ENCODE measurements at regions of chr2 and their contacts with region 1.

Region 1: DNA sequence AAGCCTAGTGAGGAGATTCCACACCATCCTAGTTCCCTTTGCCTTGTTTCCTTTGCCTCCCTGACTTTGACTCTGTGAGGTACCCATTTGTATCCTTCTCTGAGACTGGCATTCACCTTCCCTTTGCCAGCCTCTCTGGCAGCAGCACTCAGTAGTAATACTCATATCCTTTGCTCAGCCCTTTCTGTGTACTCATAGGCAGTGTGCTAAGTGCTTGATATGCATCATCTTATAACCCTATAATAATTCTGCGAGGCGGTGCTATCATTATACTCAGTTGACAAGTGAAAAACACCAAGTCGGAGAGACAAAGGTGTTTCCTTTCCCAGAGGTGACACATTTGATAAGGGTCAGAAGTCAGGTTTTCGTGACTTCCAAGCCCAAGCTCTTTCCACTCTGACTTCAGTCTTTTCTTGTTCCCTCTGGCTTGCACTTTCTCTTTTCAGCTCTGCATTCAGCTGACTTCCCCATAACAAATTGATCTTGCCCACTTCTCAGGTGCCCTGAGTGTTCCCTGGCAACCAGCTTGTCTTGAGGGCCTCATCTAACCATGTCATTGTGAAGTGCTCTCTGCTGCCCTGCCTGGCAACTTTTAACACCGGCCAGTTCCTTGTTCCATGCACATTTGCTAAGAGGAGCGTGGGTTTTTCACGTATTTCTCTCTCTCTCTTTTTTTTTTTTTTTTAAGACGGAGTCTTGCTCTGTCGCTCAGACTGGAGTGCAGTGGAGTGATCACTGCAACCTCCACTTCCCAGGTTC is 94.5 kb upstream of the UPP2 start:
- DNase-seq: peak; percentile 35
- H3K4me3 Mint-ChIP-seq: no peak overlapping the region
- H3K27ac Mint-ChIP-seq: no peak overlapping the region
- H3K4me1 Mint-ChIP-seq: peaks cover 15% of the 10 kb centered on the region
- H3K27me3 Mint-ChIP-seq: no peaks in the 10 kb centered on the region

Region 2: DNA sequence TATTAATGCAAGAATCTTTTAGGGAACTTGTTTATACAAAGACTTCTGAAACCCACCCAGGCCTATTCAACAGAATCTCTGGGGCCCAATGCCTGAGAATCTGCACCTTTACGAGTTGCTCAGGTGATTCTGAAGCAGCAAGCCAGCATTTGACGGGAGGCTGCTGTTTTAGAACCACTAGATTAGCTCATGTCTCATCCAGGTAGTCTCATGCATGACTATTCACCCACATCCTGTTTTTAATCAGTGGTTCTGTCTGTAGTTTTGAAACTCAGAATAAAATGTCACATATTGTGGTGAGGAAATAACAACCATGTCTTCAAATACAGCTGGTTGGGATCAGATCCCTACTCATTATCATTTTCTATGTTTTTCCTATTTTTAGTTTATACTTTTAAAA is 602.8 kb before region 1 on chr2:
- CTCF ChIA-PET with region 1: no interaction called
- intact Hi-C with region 1: loop called (anchors 5 kb)
- DNase-seq: peak; percentile 80
- H3K4me3 Mint-ChIP-seq: no peak overlapping the region
- H3K27ac Mint-ChIP-seq: peak overlapping the region; percentile 72
- H3K4me1 Mint-ChIP-seq: peaks cover 76% of the 10 kb centered on the region
- H3K27me3 Mint-ChIP-seq: no peaks in the 10 kb centered on the region

Region 3: DNA sequence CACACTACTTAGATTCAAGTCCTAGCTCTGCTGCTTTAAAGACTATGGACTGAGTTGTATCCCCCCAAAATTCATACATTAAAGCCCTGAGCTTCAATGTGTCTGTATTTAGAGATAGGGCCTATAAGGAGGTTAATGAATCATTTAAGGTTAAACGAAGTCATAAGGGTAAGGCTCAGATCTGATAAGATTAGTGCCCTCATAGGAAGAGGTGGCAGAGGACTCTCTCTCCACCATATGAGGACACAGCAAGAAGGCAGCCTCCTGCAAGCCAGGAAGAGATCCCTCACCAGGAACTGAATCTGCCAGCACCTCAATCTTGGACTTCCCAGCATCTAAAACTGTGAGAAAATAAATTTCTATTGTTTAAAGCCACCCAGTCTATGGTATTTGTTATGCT is 560.1 kb before region 1 on chr2:
- CTCF ChIA-PET with region 1: no interaction called
- intact Hi-C with region 1: no loop called
- DNase-seq: no peak
- H3K4me3 Mint-ChIP-seq: peak overlapping the region; percentile 76
- H3K27ac Mint-ChIP-seq: peak overlapping the region; percentile 100
- H3K4me1 Mint-ChIP-seq: peaks cover 55% of the 10 kb centered on the region
- H3K27me3 Mint-ChIP-seq: no peaks in the 10 kb centered on the region

Region 4: GRCh38 chr2:157497638-157498314 is 509.4 kb before region 1 on chr2:
- CTCF ChIA-PET with region 1: interaction called, 8 read pairs
- intact Hi-C with region 1: loop called (anchors 1 kb)
- DNase-seq: peak; percentile 25
- H3K4me3 Mint-ChIP-seq: no peak overlapping the region
- H3K27ac Mint-ChIP-seq: no peak overlapping the region
- H3K4me1 Mint-ChIP-seq: peaks cover 23% of the 10 kb centered on the region
- H3K27me3 Mint-ChIP-seq: no peaks in the 10 kb centered on the region

Region 5: DNA sequence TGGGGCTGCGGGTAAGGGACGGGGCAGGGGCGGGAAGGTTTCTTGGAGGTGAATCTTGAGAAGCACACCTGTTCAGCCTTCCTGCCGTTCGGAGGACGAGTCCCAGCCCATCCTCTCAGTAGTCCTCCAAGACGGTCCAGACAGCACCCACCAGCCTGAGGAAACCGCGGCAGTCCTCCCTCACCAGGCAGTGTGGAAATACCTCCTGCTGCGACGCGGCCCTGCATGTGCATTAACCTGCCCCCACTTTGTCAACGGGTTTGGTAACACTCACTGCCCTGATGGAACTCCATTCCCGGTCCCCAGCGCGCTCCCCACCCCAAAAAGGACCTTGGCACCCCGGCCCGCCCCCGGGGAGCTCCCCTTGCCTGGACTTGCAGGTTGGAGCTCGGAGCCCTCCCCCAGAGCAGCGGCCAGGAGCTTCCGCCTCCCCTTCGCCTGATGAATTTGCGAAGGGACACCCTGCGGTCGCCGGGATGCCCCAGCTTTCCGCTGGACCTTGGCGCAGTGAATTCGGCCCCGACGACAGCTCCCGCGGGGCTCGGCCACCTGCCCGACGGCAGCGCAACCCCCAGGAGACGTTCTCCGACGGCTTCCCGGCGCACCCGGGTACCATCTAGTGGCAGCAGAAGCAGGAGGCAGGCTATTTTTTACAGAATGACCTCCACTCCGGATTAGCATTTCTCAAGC is 410.0 kb before region 1 on chr2:
- CTCF ChIA-PET with region 1: no interaction called
- intact Hi-C with region 1: loop called (anchors 1 kb)
- DNase-seq: peak; percentile 78
- H3K4me3 Mint-ChIP-seq: peak overlapping the region; percentile 71
- H3K27ac Mint-ChIP-seq: no peak overlapping the region
- H3K4me1 Mint-ChIP-seq: peaks cover 18% of the 10 kb centered on the region
- H3K27me3 Mint-ChIP-seq: no peaks in the 10 kb centered on the region

Region 6: GRCh38 chr2:157777427-157777826 is 229.7 kb before region 1 on chr2:
- CTCF ChIA-PET with region 1: interaction called, 82 read pairs
- intact Hi-C with region 1: loop called (anchors 1 kb)
- DNase-seq: peak; percentile 80
- H3K4me3 Mint-ChIP-seq: no peak overlapping the region
- H3K27ac Mint-ChIP-seq: no peak overlapping the region
- H3K4me1 Mint-ChIP-seq: peaks cover 12% of the 10 kb centered on the region
- H3K27me3 Mint-ChIP-seq: no peaks in the 10 kb centered on the region

Measured in activated naive CD4-positive, alpha-beta T cell treated with anti-CD3 and anti-CD28 coated beads for 36 hours (primary cell).